ENCODE measurements at regions of chr7 and their contacts with region 1.

Region 1: DNA sequence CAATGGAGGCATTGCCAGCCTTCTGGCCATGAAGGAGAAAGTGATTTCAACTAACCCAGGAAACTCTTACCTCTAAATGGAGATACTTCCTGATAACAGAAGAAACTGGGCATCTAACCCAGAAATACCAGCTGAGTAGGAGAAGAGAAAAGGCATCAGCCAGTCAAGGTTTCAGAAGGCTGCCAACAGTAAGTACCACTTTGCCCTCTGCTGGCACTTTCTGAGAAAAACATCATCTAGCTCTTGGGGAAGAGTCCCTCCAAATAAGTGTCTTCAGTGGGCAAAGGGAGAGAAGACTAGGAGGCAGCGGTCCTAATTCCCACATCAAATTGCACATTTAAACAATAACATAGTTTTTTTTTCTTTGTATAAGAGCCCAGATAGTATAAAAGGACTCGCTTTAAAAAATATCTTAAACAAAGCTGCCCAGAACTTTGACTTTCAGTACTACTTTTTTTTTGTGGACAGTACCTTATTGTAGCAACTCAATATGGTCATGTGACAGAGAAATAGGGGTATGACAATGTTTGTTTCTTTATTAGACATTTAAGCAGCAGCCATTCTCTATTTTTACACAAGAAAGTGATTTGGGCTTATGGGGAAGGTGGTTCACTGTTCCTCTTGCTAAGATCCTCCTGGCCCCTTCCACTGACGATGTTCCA is 157.3 kb downstream of the CTTNBP2 start:
- DNase-seq: peak; percentile 61 to 83
- ATAC-seq: peak; percentile 94 to 98
- H3K4me3 ChIP-seq: no peak overlapping the region
- H3K27ac ChIP-seq: peak overlapping the region; percentile 39 to 63; a peak in 5 of 6 replicates
- H3K4me1 ChIP-seq: peaks cover 19% of the 10 kb centered on the region
- CTCF ChIP-seq: peak; percentile 84
- EP300 ChIP-seq: no peak
- POLR2A ChIP-seq: no peak
- RAD21 ChIP-seq: peak; percentile 95 to 96

Region 2: DNA sequence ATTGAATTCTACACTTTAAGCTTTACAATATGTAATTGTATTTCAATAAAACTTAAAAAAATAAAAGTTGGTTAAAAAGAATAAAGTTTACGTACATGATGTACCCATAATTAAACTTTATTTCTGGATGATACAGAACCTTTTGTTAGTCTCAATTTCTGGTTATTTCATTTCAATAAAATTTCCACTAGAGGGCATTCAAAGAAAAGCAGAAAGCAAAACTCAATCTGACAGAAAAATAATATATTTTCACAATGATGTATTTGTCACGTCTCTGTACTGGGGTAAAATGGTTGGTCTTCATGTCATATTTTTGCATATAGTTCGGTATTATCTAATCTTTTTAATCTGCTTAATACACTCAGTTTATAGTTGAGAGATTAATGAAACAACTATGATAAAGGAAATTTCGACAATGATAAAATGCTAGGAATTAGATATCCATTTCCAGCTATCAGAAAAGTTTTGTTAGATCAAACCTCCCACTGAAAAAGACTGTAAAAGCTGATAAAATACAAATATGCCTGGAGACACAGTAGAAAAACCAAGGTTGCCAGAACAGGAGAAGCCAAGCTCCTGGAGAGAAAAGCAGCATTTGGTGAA is 316.0 kb before region 1 on chr7:
- CTCF ChIA-PET with region 1: interaction called, 45 read pairs
- POLR2A ChIA-PET with region 1: no interaction called
- DNase-seq: peak in 1 of 2 experiments; percentile 10
- ATAC-seq: peak in 1 of 2 experiments; percentile 45; a peak in 1 of 6 replicates
- H3K4me3 ChIP-seq: no peak overlapping the region
- H3K27ac ChIP-seq: no peak overlapping the region
- H3K4me1 ChIP-seq: no peaks in the 10 kb centered on the region
- CTCF ChIP-seq: peak; percentile 80
- EP300 ChIP-seq: no peak
- POLR2A ChIP-seq: no peak
- RAD21 ChIP-seq: peak; percentile 85 to 91

Region 3: DNA sequence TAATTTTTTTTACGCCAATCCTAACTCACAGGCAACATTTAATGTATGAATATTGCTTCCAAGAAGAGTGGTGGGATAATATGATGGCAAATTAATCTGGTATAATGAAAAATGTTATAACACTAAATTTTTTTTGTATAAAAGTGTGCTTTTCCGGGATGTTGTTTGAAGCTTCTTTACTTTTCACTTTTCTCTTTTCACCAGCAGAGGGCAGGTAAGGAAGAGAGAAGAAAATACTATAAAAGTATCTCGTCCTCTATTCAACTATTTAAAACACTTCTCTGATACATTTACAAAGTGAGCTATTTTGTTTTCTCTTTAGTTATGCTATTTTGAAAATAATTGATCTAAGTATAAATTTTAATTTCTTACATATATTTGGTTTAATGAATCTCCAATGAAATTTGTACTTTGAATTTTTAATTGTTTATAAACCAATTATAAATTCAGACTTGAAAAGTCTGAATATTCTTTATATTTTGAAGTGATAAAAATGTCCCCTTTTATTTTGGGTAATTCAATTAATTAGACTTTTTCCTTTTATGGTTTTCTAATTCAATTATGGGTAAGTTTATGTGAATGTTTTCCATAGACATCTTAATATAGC is 256.8 kb before region 1 on chr7:
- CTCF ChIA-PET with region 1: interaction called, 28 read pairs
- POLR2A ChIA-PET with region 1: no interaction called
- DNase-seq: peak in 1 of 2 experiments; percentile 17
- ATAC-seq: peak in 1 of 2 experiments; percentile 63; a peak in 2 of 6 replicates
- H3K4me3 ChIP-seq: no peak overlapping the region
- H3K27ac ChIP-seq: no peak overlapping the region
- H3K4me1 ChIP-seq: no peaks in the 10 kb centered on the region
- CTCF ChIP-seq: peak; percentile 74
- EP300 ChIP-seq: no peak
- POLR2A ChIP-seq: no peak
- RAD21 ChIP-seq: peak; percentile 76 to 83

Region 4: GRCh38 chr7:117704098-117704497 is 11.8 kb before region 1 on chr7:
- CTCF ChIA-PET with region 1: interaction called, 11 read pairs
- POLR2A ChIA-PET with region 1: no interaction called
- DNase-seq: no peak
- ATAC-seq: no peak
- H3K4me3 ChIP-seq: no peak overlapping the region
- H3K27ac ChIP-seq: no peak overlapping the region
- H3K4me1 ChIP-seq: 0 out of 3 replicates have a peak, but pooled peaks cover 6% of the 10 kb centered on the region
- CTCF ChIP-seq: no peak
- EP300 ChIP-seq: no peak
- POLR2A ChIP-seq: no peak
- RAD21 ChIP-seq: no peak

Region 5: DNA sequence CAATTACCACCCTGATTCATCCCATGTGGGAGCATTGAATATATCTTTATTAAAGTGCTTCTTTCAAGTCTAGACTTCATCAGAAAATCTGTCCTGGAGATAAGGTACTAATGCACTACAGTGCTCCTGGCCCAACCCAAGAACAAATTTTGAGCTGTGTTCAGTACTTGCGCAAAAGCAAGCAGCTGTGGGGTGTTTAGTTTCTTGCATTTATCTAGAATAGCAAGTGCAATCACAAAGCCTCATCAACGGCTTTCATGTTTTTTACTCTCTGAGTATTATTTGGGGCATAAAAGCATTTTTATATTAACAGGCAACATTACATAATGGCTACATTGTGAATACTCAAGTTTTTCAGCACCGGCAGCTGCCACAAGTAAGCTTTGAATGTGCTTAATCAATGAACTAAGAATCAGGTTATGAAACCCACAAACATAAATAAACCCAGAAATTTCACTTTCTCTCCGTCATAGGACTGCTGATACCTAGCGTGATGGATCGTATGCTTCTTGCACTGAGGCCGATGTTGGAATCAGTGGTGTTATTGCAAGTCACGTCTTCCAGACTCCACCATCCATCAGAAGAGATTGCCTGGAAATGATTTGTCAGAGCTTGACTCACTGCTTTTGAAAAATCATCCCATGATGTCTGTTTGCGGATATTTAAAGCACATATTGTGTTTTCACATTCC is 44.2 kb after region 1 on chr7:
- CTCF ChIA-PET with region 1: no interaction called
- POLR2A ChIA-PET with region 1: no interaction called
- DNase-seq: no peak
- ATAC-seq: no peak
- H3K4me3 ChIP-seq: no peak overlapping the region
- H3K27ac ChIP-seq: no peak overlapping the region
- H3K4me1 ChIP-seq: no peaks in the 10 kb centered on the region
- CTCF ChIP-seq: no peak
- EP300 ChIP-seq: no peak
- POLR2A ChIP-seq: no peak
- RAD21 ChIP-seq: no peak